H1 (cell line): ENCODE measurements at regions of chr6 and their contacts with region 1.

Region 1: GRCh38 chr6:168180548-168181011 is 101.6 kb upstream of the FRMD1 start:
- DNase-seq: peak in 1 of 2 experiments; percentile 53
- H3K4me3 ChIP-seq: no peak overlapping the region
- H3K27ac ChIP-seq: no peak overlapping the region
- H3K4me1 ChIP-seq: peaks cover 5 to 25% (median 13%) of the 10 kb centered on the region in 4 experiments
- H3K27me3 ChIP-seq: peaks cover 0 to 2% (median 1%) of the 10 kb centered on the region in 4 experiments; a peak in 2 of 7 replicates
- CTCF ChIP-seq: no peak
- EP300 ChIP-seq: no peak
- POLR2A ChIP-seq: no peak
- RAD21 ChIP-seq: no peak

Region 2: GRCh38 chr6:168165373-168165772 is 15.2 kb before region 1 on chr6:
- CTCF ChIA-PET with region 1: no interaction called
- POLR2A ChIA-PET with region 1: no interaction called
- DNase-seq: no peak
- H3K4me3 ChIP-seq: no peak overlapping the region
- H3K27ac ChIP-seq: no peak overlapping the region
- H3K4me1 ChIP-seq: no peaks in the 10 kb centered on the region
- H3K27me3 ChIP-seq: 0 out of 7 replicates have a peak, but pooled peaks cover 0 to 1% (median 0%) of the 10 kb centered on the region in 4 experiments
- CTCF ChIP-seq: no peak
- EP300 ChIP-seq: no peak
- POLR2A ChIP-seq: no peak
- RAD21 ChIP-seq: no peak

Region 3: DNA sequence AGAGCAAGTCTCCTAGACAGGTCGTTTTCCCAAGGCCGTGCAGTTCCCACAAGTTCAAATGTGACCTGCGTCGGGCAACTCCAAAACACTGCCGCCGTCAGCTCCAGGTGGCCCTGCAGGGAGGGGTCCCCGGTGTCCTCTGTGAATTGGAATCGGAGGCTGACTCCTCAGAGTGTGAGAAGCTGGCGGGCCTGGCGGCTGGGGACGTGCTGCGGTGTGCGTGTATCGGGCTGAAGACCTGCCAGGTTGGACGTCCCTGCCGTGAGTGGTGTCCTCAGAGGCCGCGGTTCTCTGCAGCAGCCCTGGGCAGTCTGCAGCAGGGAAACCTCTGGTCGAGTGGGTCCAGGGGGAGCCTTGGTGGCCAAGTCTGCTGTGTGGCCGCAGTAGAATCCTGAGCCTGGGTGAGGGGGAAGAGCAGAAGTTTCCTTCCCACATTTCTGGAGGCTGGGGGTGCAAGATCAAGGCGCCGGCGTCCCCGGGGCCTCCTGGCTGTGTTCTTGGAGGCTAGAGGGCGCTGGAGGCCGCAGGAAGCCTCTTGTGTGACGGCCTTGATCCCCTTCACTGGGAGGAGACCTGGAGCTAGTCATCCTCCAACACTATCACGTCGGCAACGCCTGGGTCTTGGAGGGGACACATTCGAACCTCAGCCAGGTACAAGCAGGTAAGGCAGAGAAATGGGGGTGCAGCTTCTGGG is 13.6 kb after region 1 on chr6:
- CTCF ChIA-PET with region 1: interaction called, 17 read pairs
- POLR2A ChIA-PET with region 1: interaction called, 3 read pairs
- DNase-seq: peak in 1 of 2 experiments; percentile 63
- H3K4me3 ChIP-seq: no peak overlapping the region
- H3K27ac ChIP-seq: no peak overlapping the region
- H3K4me1 ChIP-seq: no peaks in the 10 kb centered on the region; a peak in 1 of 7 replicates
- H3K27me3 ChIP-seq: no peaks in the 10 kb centered on the region
- CTCF ChIP-seq: peak in 2 of 3 experiments; percentile 39 to 52; a peak in 3 of 4 replicates
- EP300 ChIP-seq: no peak
- POLR2A ChIP-seq: no peak
- RAD21 ChIP-seq: peak; percentile 65 to 76